MCF 10A (cell line): ENCODE measurements at regions of chr7 and their contacts with region 1.

Region 1: DNA sequence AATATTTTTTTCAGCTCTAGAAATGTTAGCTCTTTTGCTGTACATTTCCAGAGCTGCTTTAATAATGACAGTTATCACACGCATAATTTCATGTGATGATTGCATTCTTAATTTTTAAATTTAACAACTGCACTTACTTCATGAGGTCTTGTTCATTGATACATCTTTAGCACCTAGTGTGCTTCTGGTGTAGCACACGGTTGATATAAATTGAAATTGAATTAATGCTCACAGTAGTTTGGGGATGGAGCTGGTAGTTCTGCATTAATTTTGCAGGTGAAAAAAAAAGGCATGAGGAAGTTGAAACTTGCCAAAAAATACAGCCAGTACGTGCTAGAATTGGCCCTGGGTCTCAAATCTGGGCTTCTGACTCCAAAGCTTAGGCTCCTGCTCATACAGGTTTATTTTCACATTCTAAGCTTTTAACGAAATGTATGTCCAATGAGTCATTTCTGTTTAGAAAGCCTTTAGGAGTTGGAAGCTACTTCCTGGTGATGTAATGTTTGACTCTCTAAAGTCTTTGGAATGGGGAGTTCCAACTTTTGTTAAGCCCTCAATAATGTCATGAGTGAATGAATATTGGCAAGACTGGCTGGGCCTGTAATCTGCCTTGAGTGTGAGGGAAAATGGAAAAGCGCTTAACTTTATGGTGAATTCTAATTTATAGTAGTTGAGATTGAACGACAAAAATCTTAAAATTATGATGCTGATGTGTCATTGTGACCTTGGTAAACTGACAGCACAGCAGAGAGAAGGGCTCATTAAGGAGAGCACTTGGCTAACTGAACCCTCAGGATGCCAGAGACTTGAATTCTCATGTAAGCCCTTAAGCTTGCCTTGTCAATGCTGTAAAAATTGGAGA is 62.4 kb downstream of the DAGLB start:
- DNase-seq: peak; percentile 96
- H3K4me3 Mint-ChIP-seq: peak overlapping the region; percentile 36
- H3K27ac Mint-ChIP-seq: peak overlapping the region; percentile 96
- H3K4me1 Mint-ChIP-seq: peaks cover 26% of the 10 kb centered on the region
- H3K27me3 Mint-ChIP-seq: no peaks in the 10 kb centered on the region
- CTCF ChIP-seq: no peak

Region 2: GRCh38 chr7:6350433-6351058 is 34.8 kb before region 1 on chr7:
- CTCF ChIA-PET with region 1: no interaction called
- POLR2A ChIA-PET with region 1: interaction called, 14 read pairs
- intact Hi-C with region 1: no loop called
- DNase-seq: peak; percentile 47
- H3K4me3 Mint-ChIP-seq: no peak overlapping the region
- H3K27ac Mint-ChIP-seq: peak overlapping the region; percentile 23
- H3K4me1 Mint-ChIP-seq: no peaks in the 10 kb centered on the region
- H3K27me3 Mint-ChIP-seq: no peaks in the 10 kb centered on the region
- CTCF ChIP-seq: no peak

Region 3: GRCh38 chr7:6398943-6399342 is 13.6 kb after region 1 on chr7:
- CTCF ChIA-PET with region 1: interaction called, 4 read pairs
- POLR2A ChIA-PET with region 1: interaction called, 28 read pairs
- intact Hi-C with region 1: no loop called
- DNase-seq: peak; percentile 22
- H3K4me3 Mint-ChIP-seq: peak overlapping the region; percentile 55
- H3K27ac Mint-ChIP-seq: peak overlapping the region; percentile 63
- H3K4me1 Mint-ChIP-seq: peaks cover 43% of the 10 kb centered on the region
- H3K27me3 Mint-ChIP-seq: no peaks in the 10 kb centered on the region
- CTCF ChIP-seq: no peak

Region 4: DNA sequence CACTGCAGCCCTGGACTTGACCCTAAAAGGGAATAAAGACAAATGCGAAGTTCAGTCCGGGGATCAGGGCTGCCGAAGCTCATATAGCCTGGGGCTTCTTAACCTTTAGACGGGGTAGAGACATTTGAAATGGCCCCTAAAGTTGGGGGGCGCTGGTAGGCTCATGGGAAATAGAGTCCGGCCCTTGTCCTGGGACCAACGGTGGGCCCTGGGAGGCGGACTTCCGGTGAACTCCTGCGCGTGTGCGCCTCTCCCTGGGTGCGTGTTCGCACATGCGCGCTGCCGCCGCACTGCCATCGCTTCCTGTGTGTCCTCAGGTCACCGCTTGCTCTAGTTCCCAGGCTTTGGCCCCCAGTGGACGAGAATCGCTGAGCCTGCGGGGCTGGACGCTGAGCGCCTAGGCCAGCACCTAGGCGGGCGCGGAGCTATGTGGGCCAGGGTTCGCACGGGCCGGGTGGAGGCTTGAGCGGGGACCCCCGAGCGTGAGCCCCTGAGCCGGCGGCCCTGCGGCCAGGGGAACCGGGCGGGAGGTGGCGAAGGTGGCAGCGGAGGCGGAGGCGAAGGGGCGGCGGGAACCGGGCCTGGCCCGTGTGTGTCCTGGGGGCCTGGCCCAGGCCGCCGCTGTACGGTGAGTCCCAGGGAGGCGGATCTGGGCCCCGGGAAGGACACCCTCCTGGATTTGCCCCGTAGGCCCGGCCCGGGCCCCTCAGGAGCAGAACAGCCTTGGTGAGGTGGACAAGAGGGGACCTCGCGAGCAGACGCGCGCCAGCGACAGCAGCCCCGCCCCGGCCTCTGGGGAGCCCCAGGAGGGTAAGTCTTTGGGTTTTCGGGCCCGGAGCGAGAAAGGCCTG is 344.4 kb after region 1 on chr7:
- CTCF ChIA-PET with region 1: no interaction called
- POLR2A ChIA-PET with region 1: no interaction called
- intact Hi-C with region 1: no loop called
- DNase-seq: peak; percentile 83
- H3K4me3 Mint-ChIP-seq: peak overlapping the region; percentile 85
- H3K27ac Mint-ChIP-seq: peak overlapping the region; percentile 95
- H3K4me1 Mint-ChIP-seq: peaks cover 10% of the 10 kb centered on the region
- H3K27me3 Mint-ChIP-seq: no peaks in the 10 kb centered on the region
- CTCF ChIP-seq: no peak